Lower leg skin (tissue), 4 donors: ENCODE measurements at regions of chr11 and their contacts with region 1.

Region 1: GRCh38 chr11:117833401-117833891 is 8.9 kb upstream of the FXYD2 start:
- DNase-seq: peak in 1 of 2 donors; percentile 87
- H3K4me3 ChIP-seq: no peak overlapping the region
- CTCF ChIP-seq: no peak
- POLR2A ChIP-seq: no peak

Region 2: DNA sequence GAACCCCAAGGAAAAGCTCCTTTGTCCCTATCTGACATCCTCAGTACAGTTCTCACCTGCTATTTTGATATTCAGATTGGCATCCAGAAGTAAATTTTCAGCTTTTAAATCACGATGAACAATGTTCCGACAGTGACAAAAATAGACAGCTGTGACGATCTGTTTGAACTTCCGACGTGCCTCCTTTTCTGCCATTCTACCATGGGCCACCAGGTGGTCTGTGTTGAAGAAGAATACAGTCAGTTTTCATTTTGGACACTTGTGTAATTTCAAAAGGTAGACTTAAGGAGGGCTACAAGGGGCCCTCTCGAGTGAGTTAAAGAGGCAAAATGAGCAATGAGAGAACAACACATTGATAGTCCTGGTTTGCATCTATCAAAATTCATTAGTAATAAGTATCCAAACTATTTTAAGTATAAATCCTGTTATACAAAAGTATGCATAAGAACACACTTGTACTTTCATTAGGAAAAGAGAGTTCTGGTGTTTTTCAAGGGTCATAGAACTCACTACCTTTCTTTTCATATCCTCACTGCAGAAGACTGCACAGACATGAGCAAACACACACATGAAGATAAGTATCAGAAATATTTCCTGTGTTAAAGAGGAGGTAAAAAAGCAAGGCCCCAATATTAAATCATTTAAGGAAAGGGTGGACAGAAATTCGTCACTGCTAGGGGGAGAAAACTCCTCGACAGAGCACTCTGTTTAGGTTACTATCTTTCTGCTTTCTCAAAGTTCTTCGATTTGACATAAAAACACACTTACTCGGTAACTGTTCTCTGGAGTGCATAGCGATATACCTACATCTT is 906.1 kb before region 1 on chr11:
- intact Hi-C with region 1: no loop called
- DNase-seq: no peak
- H3K4me3 ChIP-seq: no peak overlapping the region
- CTCF ChIP-seq: no peak
- POLR2A ChIP-seq: no peak

Region 3: GRCh38 chr11:116953530-116954285 is 879.7 kb before region 1 on chr11:
- intact Hi-C with region 1: loop called (anchors 5 kb)
- DNase-seq: no peak
- H3K4me3 ChIP-seq: no peak overlapping the region
- CTCF ChIP-seq: no peak
- POLR2A ChIP-seq: no peak

Region 4: GRCh38 chr11:117479372-117479771 is 354.1 kb before region 1 on chr11:
- intact Hi-C with region 1: no loop called
- DNase-seq: no peak
- H3K4me3 ChIP-seq: no peak overlapping the region
- CTCF ChIP-seq: no peak
- POLR2A ChIP-seq: no peak

Region 5: DNA sequence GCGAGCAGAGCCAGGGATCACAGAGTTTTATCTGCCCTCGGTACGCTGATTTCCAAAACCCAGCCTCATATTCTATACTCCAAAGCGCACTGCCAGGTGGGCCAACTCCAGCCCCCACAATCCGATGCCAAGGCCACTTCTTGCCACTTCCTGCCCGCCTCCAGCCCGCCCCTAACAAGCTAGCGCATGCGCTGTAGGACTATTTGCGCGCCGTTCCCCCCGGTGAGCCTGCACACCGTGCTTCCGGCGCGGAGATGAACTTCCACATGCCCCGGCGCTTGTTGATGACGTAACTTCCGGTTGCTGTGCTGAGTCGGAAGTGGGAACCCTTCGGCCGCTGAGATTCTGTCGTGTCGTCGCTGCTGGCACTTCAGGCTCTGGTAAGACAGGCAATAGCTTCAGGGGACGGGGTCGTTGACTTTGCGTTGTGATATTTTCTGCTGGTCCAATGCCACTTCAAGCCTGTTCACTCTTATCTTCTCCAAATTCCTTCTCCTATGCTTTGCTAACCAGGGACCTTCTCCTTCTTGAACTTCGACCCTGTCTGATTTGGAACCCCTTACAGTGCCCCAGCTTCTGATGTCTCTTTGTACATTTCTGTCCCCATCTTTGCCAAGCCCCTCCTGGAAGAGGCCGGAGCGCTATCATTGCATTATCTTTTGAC is 526.0 kb after region 1 on chr11 and contains the start of gene UBE4A:
- intact Hi-C with region 1: no loop called
- DNase-seq: peak; percentile 94 to 99
- H3K4me3 ChIP-seq: peak within 1 kb of the TSS; percentile 96
- CTCF ChIP-seq: no peak
- POLR2A ChIP-seq: peak in 1 of 2 donors; percentile 17
- total RNA-seq, gene UBE4A: 40.3 to 46.1 (median 44.4) TPM

Region 6: GRCh38 chr11:118396097-118396501 is 562.7 kb after region 1 on chr11:
- intact Hi-C with region 1: no loop called
- DNase-seq: no peak
- H3K4me3 ChIP-seq: no peak overlapping the region
- CTCF ChIP-seq: no peak
- POLR2A ChIP-seq: no peak